ENCODE measurements at regions of chr1 and their contacts with region 1.

Region 1: DNA sequence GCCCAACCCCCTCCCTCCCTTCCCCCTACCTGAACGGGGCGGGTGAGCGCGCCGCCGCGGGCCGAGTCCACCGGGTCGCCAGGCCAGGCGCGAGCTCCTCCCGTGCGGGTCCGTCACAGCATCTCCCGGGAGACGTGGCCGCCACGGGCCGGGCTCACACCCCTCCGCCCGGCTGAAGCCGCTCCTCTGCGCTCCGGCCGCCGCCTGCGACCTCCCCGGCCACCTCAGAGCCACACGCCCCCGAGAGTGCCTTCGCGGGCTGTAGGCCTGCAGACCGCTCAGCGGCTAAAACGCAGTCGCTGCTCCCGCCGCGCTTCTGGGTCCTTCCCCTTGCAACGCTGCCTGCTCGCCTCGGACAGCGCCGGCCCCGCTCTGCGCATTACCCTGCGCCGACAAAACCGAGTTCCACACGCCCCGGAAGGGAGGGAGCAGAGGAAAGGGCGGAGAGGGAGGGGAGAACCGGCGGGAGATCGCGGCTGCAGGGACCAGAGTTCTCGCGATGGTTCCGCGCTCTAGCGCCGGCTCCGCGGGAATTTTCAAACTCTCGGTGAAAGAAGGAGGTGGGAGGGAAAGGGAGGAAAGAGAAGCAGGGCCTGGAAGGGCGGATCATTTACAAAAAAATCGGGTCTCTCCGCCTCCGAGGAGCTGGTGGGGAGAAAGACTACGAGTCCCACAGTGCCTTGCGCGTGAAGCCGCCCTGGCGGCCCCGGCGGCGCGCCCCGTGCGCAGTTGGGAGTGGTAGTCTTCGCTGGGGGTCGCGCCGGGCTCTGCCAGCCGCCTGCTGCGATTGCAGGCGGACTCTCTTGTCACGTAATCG is at the start of gene AHCTF1:
- DNase-seq: peak; percentile 89 to 98 (median 92)
- ATAC-seq: peak; percentile 90
- H3K4me3 ChIP-seq: peak within 1 kb of the TSS; percentile 94
- H3K4me3 Mint-ChIP-seq: peak within 1 kb of the TSS; percentile 99
- H3K27ac ChIP-seq: peak within 1 kb of the TSS; percentile 87 to 88
- H3K27ac Mint-ChIP-seq: peak within 1 kb of the TSS; percentile 96
- H3K4me1 ChIP-seq: peaks cover 20% of the 10 kb centered on the region
- H3K4me1 Mint-ChIP-seq: peaks cover 46% of the 10 kb centered on the region
- H3K27me3 ChIP-seq: no peaks in the 10 kb centered on the region
- H3K27me3 Mint-ChIP-seq: no peaks in the 10 kb centered on the region
- CTCF ChIP-seq: no peak
- total RNA-seq, gene AHCTF1: 65.6 to 68.8 TPM

Region 2: GRCh38 chr1:246506674-246507481 is 424.9 kb before region 1 on chr1 and contains the start of gene SMYD3:
- CTCF ChIA-PET with region 1: no interaction called
- POLR2A ChIA-PET with region 1: interaction called, 3 read pairs
- intact Hi-C with region 1: loop called in 1 of 2 experiments (anchors 5 kb)
- DNase-seq: peak; percentile 57 to 93 (median 73)
- ATAC-seq: peak; percentile 85
- H3K4me3 ChIP-seq: peak within 1 kb of the TSS; percentile 81
- H3K4me3 Mint-ChIP-seq: peak within 1 kb of the TSS; percentile 94
- H3K27ac ChIP-seq: peak within 1 kb of the TSS in 1 of 2 donors; percentile 27
- H3K27ac Mint-ChIP-seq: peak within 1 kb of the TSS; percentile 90
- H3K4me1 ChIP-seq: peaks cover 20% of the 10 kb centered on the region
- H3K4me1 Mint-ChIP-seq: peaks cover 37% of the 10 kb centered on the region
- H3K27me3 ChIP-seq: no peaks in the 10 kb centered on the region
- H3K27me3 Mint-ChIP-seq: no peaks in the 10 kb centered on the region
- CTCF ChIP-seq: no peak
- total RNA-seq, gene SMYD3: 18.8 to 19.6 TPM

Region 3: GRCh38 chr1:247103859-247104591 is 172.3 kb after region 1 on chr1 and contains the start of gene ZNF669:
- CTCF ChIA-PET with region 1: no interaction called
- POLR2A ChIA-PET with region 1: no interaction called
- intact Hi-C with region 1: loop called in 1 of 2 experiments (anchors 5 kb)
- DNase-seq: peak; percentile 81 to 95 (median 88)
- ATAC-seq: peak; percentile 98
- H3K4me3 ChIP-seq: peak within 1 kb of the TSS; percentile 97
- H3K4me3 Mint-ChIP-seq: peak within 1 kb of the TSS; percentile 87
- H3K27ac ChIP-seq: peak within 1 kb of the TSS; percentile 64 to 74
- H3K27ac Mint-ChIP-seq: peak within 1 kb of the TSS; percentile 82
- H3K4me1 ChIP-seq: peaks cover 15% of the 10 kb centered on the region
- H3K4me1 Mint-ChIP-seq: peaks cover 20% of the 10 kb centered on the region
- H3K27me3 ChIP-seq: peaks cover 12 to 17% of the 10 kb centered on the region in 2 experiments
- H3K27me3 Mint-ChIP-seq: peaks cover 33% of the 10 kb centered on the region
- CTCF ChIP-seq: no peak
- total RNA-seq, gene ZNF669: 13.2 to 15.1 TPM

Region 4: GRCh38 chr1:247210376-247211117 is 278.8 kb after region 1 on chr1:
- CTCF ChIA-PET with region 1: no interaction called
- POLR2A ChIA-PET with region 1: interaction called, 9 read pairs
- intact Hi-C with region 1: loop called (anchors 2 to 5 kb)
- DNase-seq: peak; percentile 83 to 97 (median 92)
- ATAC-seq: peak; percentile 99
- H3K4me3 ChIP-seq: peak overlapping the region; percentile 79
- H3K4me3 Mint-ChIP-seq: peak overlapping the region; percentile 98
- H3K27ac ChIP-seq: peak overlapping the region; percentile 63 to 79
- H3K27ac Mint-ChIP-seq: peak overlapping the region; percentile 96
- H3K4me1 ChIP-seq: peaks cover 39% of the 10 kb centered on the region
- H3K4me1 Mint-ChIP-seq: peaks cover 76% of the 10 kb centered on the region
- H3K27me3 ChIP-seq: no peaks in the 10 kb centered on the region
- H3K27me3 Mint-ChIP-seq: no peaks in the 10 kb centered on the region
- CTCF ChIP-seq: no peak

Region 5: GRCh38 chr1:247373721-247374141 is 442.0 kb after region 1 on chr1:
- CTCF ChIA-PET with region 1: no interaction called
- POLR2A ChIA-PET with region 1: no interaction called
- intact Hi-C with region 1: loop called in 1 of 2 experiments (anchors 10 kb)
- DNase-seq: peak; percentile 25 to 77 (median 50)
- ATAC-seq: peak; percentile 87
- H3K4me3 ChIP-seq: peak overlapping the region; percentile 14
- H3K4me3 Mint-ChIP-seq: no peak overlapping the region
- H3K27ac ChIP-seq: no peak overlapping the region
- H3K27ac Mint-ChIP-seq: no peak overlapping the region
- H3K4me1 ChIP-seq: peaks cover 7% of the 10 kb centered on the region
- H3K4me1 Mint-ChIP-seq: peaks cover 9% of the 10 kb centered on the region
- H3K27me3 ChIP-seq: no peaks in the 10 kb centered on the region
- H3K27me3 Mint-ChIP-seq: peaks cover 16% of the 10 kb centered on the region
- CTCF ChIP-seq: peak; percentile 64

Measured in CD4-positive, alpha-beta T cell (primary cell).